ENCODE measurements at regions of chr11 and their contacts with region 1.

Region 1: GRCh38 chr11:18105802-18106574 is at the start of gene SAAL1:
- DNase-seq: peak; percentile 98
- H3K4me3 Mint-ChIP-seq: peak within 1 kb of the TSS; percentile 91
- H3K27ac Mint-ChIP-seq: peak within 1 kb of the TSS; percentile 89
- H3K4me1 Mint-ChIP-seq: peaks cover 26% of the 10 kb centered on the region
- H3K27me3 Mint-ChIP-seq: peaks cover 12% of the 10 kb centered on the region
- total RNA-seq, gene SAAL1: 40.1 and 43.5 TPM in 2 replicates

Region 2: DNA sequence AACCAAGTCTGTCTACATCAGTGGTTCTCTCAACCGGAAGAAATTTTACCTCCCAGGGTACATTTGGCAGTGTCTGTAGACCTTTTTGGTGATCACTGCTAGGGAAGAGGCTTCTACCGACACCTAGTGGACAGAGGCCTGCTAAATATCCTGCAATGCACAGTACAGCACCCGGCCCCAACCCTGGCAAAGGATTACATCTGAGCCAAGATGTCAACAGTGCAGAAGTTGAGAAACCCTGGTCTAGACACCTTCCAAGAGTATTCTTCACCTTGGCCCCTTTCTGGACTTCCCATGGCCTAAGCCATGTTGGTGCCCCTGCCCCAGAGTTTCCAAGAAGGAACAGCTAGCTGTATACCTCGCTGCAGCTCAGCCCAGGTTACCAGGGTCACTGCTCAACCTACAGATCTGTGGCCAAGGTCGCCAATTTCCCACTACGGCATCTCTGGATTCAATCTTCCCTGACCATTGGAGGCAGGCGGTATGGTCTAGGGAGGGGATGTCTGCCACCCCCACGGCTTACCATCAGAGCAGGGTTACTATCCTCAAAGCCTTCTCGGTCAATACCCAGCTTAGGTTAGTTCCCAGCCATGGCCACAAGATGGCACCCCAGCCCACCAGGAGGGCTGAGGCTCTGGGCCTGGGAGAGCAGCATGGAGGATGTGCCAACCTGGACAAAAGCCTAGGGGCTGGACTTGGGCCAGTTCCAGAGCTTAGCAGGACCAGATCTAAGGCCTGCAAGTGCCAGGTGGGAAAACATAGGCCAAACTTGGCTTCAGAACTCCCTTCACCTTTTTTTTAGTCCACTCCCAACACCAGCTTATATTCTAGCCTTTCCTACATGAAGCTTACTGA is 375.2 kb before region 1 on chr11:
- intact Hi-C with region 1: loop called (anchors 5 kb)
- DNase-seq: peak; percentile 90
- H3K4me3 Mint-ChIP-seq: no peak overlapping the region
- H3K27ac Mint-ChIP-seq: no peak overlapping the region
- H3K4me1 Mint-ChIP-seq: peaks cover 4% of the 10 kb centered on the region
- H3K27me3 Mint-ChIP-seq: peaks cover 51% of the 10 kb centered on the region

Region 3: GRCh38 chr11:17991783-17992433 is 114.1 kb before region 1 on chr11:
- intact Hi-C with region 1: loop called (anchors 1 kb)
- DNase-seq: peak; percentile 82
- H3K4me3 Mint-ChIP-seq: no peak overlapping the region
- H3K27ac Mint-ChIP-seq: no peak overlapping the region
- H3K4me1 Mint-ChIP-seq: peaks cover 2% of the 10 kb centered on the region
- H3K27me3 Mint-ChIP-seq: no peaks in the 10 kb centered on the region

Region 4: DNA sequence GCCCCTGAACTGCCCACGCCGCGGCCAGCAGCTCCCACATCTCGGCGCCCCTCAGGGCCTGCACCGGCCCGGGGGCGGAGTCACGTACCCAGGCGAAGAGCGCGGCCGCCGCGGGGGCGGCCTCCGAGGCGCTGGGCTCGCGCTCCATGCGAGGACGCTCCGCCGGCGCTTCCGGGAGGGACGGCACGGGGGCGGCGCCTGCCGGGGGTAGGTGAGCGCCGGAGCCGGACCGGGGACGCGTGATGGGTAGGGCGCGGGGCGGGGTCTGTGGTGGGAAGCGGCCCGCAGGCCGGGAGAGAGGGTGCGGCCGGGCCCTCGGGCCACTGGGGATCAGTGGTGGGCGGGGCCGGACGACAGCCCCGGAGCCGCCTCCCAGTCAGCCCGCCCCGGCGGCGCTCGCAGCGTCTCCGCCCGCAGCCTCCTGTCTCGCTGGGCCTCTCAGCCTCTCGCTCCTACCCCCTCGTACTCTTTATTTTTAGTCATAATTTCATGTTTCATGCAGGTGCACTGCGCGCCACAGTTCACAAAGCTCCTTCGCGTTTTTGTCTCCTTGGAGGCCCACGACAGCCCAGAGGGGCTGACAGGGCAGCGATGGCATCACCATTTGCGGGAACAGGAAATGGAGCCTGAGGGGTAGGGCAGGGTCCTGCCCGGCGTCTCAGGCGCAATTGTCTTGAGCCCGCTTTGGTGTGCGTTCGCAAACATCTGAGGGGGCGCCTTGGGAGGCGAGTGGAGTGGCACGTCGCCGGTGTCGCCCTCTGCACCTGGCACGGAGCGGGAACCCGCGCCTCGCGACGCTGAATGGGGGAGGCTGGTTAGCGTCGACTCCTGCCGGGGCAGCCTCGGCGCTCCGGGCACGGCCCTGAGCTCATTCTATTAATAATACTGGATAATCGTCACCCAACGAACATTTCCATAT is 92.9 kb before region 1 on chr11 and contains the start of gene SERGEF:
- intact Hi-C with region 1: loop called (anchors 1 kb)
- DNase-seq: peak; percentile 98
- H3K4me3 Mint-ChIP-seq: peak within 1 kb of the TSS; percentile 90
- H3K27ac Mint-ChIP-seq: peak within 1 kb of the TSS; percentile 92
- H3K4me1 Mint-ChIP-seq: peaks cover 37% of the 10 kb centered on the region
- H3K27me3 Mint-ChIP-seq: peaks cover 3% of the 10 kb centered on the region
- total RNA-seq, gene SERGEF: 26.2 and 35.8 TPM in 2 replicates

Region 5: GRCh38 chr11:18395735-18396504 is 289.9 kb after region 1 on chr11:
- intact Hi-C with region 1: loop called (anchors 5 kb)
- DNase-seq: peak; percentile 99
- H3K4me3 Mint-ChIP-seq: peak overlapping the region; percentile 97
- H3K27ac Mint-ChIP-seq: peak overlapping the region; percentile 98
- H3K4me1 Mint-ChIP-seq: peaks cover 54% of the 10 kb centered on the region
- H3K27me3 Mint-ChIP-seq: no peaks in the 10 kb centered on the region

Region 6: GRCh38 chr11:18526521-18527296 is 420.7 kb after region 1 on chr11 and contains the start of gene TSG101:
- intact Hi-C with region 1: loop called (anchors 10 kb)
- DNase-seq: peak; percentile 98
- H3K4me3 Mint-ChIP-seq: peak within 1 kb of the TSS; percentile 99
- H3K27ac Mint-ChIP-seq: peak within 1 kb of the TSS; percentile 100
- H3K4me1 Mint-ChIP-seq: peaks cover 29% of the 10 kb centered on the region
- H3K27me3 Mint-ChIP-seq: no peaks in the 10 kb centered on the region
- total RNA-seq, gene TSG101: 39.6 and 43.5 TPM in 2 replicates

Region 7: DNA sequence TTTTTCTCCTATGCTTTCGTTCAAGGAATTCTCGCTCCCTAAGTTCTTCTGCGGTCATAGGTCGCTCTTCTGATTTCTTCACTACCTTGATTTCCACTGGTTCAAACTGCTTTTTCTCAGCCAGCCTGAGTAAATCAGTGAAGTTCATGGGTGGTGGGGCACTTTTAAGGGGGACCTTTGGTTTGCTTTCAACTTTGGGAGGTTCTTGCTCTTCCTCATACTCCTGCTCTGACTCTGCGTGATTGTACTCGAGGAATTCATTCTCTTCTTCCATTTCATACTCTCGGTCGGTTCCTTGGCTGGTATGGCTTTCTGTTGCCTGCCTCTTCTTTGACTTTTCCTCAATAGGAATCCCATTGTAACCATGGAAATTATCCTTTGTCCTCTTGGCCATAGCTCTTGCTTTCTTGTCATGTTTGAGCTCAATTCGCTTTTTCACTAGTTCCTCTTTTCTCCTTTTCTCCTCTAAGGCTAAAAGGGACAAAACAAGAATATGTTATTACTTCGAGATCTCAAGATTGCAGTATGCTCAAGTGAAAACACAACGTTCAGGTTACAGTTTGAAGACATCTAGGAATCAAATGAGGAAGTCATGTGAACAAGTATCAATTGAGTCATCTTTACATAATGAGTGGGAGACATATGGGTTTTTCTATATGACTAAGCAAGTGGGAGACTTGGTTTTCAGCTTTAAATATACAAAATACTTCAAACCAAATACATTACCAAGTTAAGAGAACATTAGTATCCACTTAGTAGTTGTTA is 509.8 kb after region 1 on chr11:
- intact Hi-C with region 1: loop called (anchors 5 kb)
- DNase-seq: no peak
- H3K4me3 Mint-ChIP-seq: peak overlapping the region; percentile 77
- H3K27ac Mint-ChIP-seq: peak overlapping the region; percentile 85
- H3K4me1 Mint-ChIP-seq: peaks cover 44% of the 10 kb centered on the region
- H3K27me3 Mint-ChIP-seq: no peaks in the 10 kb centered on the region